ENCODE measurements at regions of chr9 and their contacts with region 1.

Region 1: GRCh38 chr9:87812375-87813118 is 70.1 kb upstream of the SPATA31E1 start:
- DNase-seq: peak; percentile 38 to 39
- H3K4me3 ChIP-seq: no peak overlapping the region
- H3K27ac ChIP-seq: no peak overlapping the region
- H3K4me1 ChIP-seq: no peaks in the 10 kb centered on the region
- H3K27me3 ChIP-seq: no peaks in the 10 kb centered on the region
- CTCF ChIP-seq: peak; percentile 98

Region 2: GRCh38 chr9:87656485-87656884 is 156.1 kb before region 1 on chr9:
- CTCF ChIA-PET with region 1: no interaction called
- POLR2A ChIA-PET with region 1: no interaction called
- intact Hi-C with region 1: no loop called
- DNase-seq: no peak
- H3K4me3 ChIP-seq: no peak overlapping the region
- H3K27ac ChIP-seq: no peak overlapping the region
- H3K4me1 ChIP-seq: no peaks in the 10 kb centered on the region
- H3K27me3 ChIP-seq: no peaks in the 10 kb centered on the region
- CTCF ChIP-seq: no peak

Region 3: GRCh38 chr9:87678650-87679515 is 133.7 kb before region 1 on chr9:
- CTCF ChIA-PET with region 1: no interaction called
- POLR2A ChIA-PET with region 1: no interaction called
- intact Hi-C with region 1: loop called (anchors 1 kb)
- DNase-seq: peak; percentile 50 to 59
- H3K4me3 ChIP-seq: no peak overlapping the region
- H3K27ac ChIP-seq: no peak overlapping the region
- H3K4me1 ChIP-seq: no peaks in the 10 kb centered on the region
- H3K27me3 ChIP-seq: no peaks in the 10 kb centered on the region
- CTCF ChIP-seq: peak; percentile 88

Region 4: GRCh38 chr9:87684627-87685219 is 127.8 kb before region 1 on chr9:
- CTCF ChIA-PET with region 1: interaction called, 5 read pairs
- POLR2A ChIA-PET with region 1: no interaction called
- intact Hi-C with region 1: loop called (anchors 1 kb)
- DNase-seq: peak in 1 of 2 experiments; percentile 64
- H3K4me3 ChIP-seq: no peak overlapping the region
- H3K27ac ChIP-seq: peak overlapping the region; percentile 36; the same call in 1 of the 2 replicates
- H3K4me1 ChIP-seq: 0 out of 2 replicates have a peak, but pooled peaks cover 5% of the 10 kb centered on the region
- H3K27me3 ChIP-seq: no peaks in the 10 kb centered on the region
- CTCF ChIP-seq: peak; percentile 87

Region 5: GRCh38 chr9:87763286-87763685 is 49.3 kb before region 1 on chr9:
- CTCF ChIA-PET with region 1: no interaction called
- POLR2A ChIA-PET with region 1: no interaction called
- intact Hi-C with region 1: no loop called
- DNase-seq: no peak
- H3K4me3 ChIP-seq: no peak overlapping the region
- H3K27ac ChIP-seq: no peak overlapping the region
- H3K4me1 ChIP-seq: peaks cover 25% of the 10 kb centered on the region
- H3K27me3 ChIP-seq: no peaks in the 10 kb centered on the region
- CTCF ChIP-seq: no peak

Region 6: DNA sequence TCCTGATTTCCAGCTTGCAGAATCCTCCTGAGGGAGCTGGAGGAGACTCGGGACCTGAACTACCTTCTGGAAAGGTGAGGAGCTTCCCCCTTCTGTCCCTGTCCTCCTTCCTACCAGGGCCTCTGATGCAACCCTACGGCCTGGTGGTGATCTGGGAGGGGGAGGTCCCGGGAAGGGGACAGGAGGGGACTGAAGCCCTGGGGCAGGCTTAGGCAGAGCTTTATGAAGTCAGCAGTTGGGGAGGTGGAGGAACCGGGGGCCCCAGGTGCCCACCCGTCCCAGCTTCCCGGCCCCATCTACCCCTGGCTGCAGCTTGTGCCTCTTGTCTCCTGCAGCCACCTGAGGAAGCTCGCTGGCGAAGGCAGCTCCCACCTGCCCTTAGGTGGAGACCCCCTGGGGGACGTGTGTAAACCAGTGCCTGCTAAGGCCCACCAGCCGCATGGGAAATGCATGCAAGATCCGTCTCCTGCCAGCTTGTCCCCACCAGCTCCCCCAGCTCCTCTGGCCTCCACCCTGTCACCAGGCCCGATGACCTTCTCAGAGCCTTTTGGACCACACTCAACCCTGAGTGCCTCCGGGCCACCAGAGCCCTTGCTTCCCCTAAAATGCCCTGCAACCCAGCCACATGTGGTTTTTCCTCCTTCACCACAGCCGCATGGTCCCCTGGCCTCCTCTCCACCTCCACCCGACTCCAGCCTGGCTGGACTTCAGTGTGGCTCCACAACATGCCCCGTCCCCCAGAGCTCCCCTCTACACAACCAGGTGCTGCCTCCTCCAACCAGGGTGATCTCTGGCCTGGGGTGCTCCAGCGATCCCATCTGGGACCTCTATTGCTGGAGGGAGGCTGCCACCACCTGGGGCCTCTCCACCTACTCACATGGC is 72.3 kb after region 1 on chr9:
- CTCF ChIA-PET with region 1: no interaction called
- POLR2A ChIA-PET with region 1: no interaction called
- intact Hi-C with region 1: loop called (anchors 5 kb)
- DNase-seq: no peak
- H3K4me3 ChIP-seq: no peak overlapping the region
- H3K27ac ChIP-seq: no peak overlapping the region
- H3K4me1 ChIP-seq: no peaks in the 10 kb centered on the region
- H3K27me3 ChIP-seq: no peaks in the 10 kb centered on the region
- CTCF ChIP-seq: no peak